Activated naive CD4-positive, alpha-beta T cell treated with anti-CD3 and anti-CD28 coated beads for 36 hours (primary cell): ENCODE measurements at regions of chr14 and their contacts with region 1.

Region 1: GRCh38 chr14:90235179-90235976 is 21.0 kb upstream of the PSMC1 start:
- DNase-seq: peak; percentile 82
- H3K4me3 Mint-ChIP-seq: no peak overlapping the region
- H3K27ac Mint-ChIP-seq: no peak overlapping the region
- H3K4me1 Mint-ChIP-seq: peaks cover 2% of the 10 kb centered on the region
- H3K27me3 Mint-ChIP-seq: peaks cover 2% of the 10 kb centered on the region

Region 2: DNA sequence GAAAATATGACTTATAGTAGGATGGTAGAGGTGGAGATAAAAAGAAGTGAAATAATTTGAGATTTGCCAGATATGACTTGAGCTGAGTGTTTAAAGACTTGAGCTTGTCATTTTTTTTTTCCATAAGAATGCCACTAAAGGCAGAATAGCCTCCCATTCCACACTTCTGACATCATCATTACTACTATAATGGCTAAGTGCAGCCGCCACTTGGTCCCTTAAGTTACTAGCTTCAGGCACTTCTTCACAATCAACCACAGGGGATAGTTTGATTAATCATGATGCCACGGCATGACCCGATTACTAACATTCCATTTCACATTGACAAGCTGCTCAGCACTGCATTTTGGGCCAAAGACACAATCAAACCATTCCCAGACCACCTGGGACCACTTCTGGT is 408.8 kb before region 1 on chr14:
- CTCF ChIA-PET with region 1: no interaction called
- intact Hi-C with region 1: no loop called
- DNase-seq: no peak
- H3K4me3 Mint-ChIP-seq: no peak overlapping the region
- H3K27ac Mint-ChIP-seq: no peak overlapping the region
- H3K4me1 Mint-ChIP-seq: no peaks in the 10 kb centered on the region
- H3K27me3 Mint-ChIP-seq: peaks cover 2% of the 10 kb centered on the region

Region 3: GRCh38 chr14:90060312-90060964 is 174.9 kb before region 1 on chr14:
- CTCF ChIA-PET with region 1: no interaction called
- intact Hi-C with region 1: loop called (anchors 2 kb)
- DNase-seq: peak; percentile 49
- H3K4me3 Mint-ChIP-seq: peak overlapping the region; percentile 72
- H3K27ac Mint-ChIP-seq: no peak overlapping the region
- H3K4me1 Mint-ChIP-seq: peaks cover 14% of the 10 kb centered on the region
- H3K27me3 Mint-ChIP-seq: peaks cover 54% of the 10 kb centered on the region